ENCODE measurements at regions of chr3 and their contacts with region 1.

Region 1: GRCh38 chr3:171829841-171830517 is 13.2 kb upstream of the TMEM212 start:
- DNase-seq: peak; percentile 96
- H3K4me3 ChIP-seq: no peak overlapping the region
- H3K27ac ChIP-seq: peak overlapping the region; percentile 74
- H3K4me1 ChIP-seq: peaks cover 51% of the 10 kb centered on the region
- H3K27me3 ChIP-seq: no peaks in the 10 kb centered on the region
- CTCF ChIP-seq: peak; percentile 74 to 81
- POLR2A ChIP-seq: no peak

Region 2: GRCh38 chr3:171646357-171647133 is 183.4 kb before region 1 on chr3:
- CTCF ChIA-PET with region 1: interaction called, 27 read pairs
- POLR2A ChIA-PET with region 1: no interaction called
- dilution Hi-C with region 1: no loop called
- intact Hi-C with region 1: loop called (anchors 1 kb)
- DNase-seq: peak; percentile 70
- H3K4me3 ChIP-seq: no peak overlapping the region
- H3K27ac ChIP-seq: no peak overlapping the region
- H3K4me1 ChIP-seq: peaks cover 3% of the 10 kb centered on the region
- H3K27me3 ChIP-seq: no peaks in the 10 kb centered on the region
- CTCF ChIP-seq: peak; percentile 15 to 45
- POLR2A ChIP-seq: no peak

Region 3: GRCh38 chr3:171781711-171782127 is 48.3 kb before region 1 on chr3:
- CTCF ChIA-PET with region 1: interaction called, 24 read pairs
- POLR2A ChIA-PET with region 1: no interaction called
- dilution Hi-C with region 1: no loop called
- intact Hi-C with region 1: no loop called
- DNase-seq: peak; percentile 44
- H3K4me3 ChIP-seq: no peak overlapping the region
- H3K27ac ChIP-seq: peak overlapping the region; percentile 61
- H3K4me1 ChIP-seq: peaks cover 53% of the 10 kb centered on the region
- H3K27me3 ChIP-seq: no peaks in the 10 kb centered on the region
- CTCF ChIP-seq: no peak
- POLR2A ChIP-seq: no peak

Region 4: GRCh38 chr3:171801738-171802600 is 28.0 kb before region 1 on chr3:
- CTCF ChIA-PET with region 1: interaction called, 15 read pairs
- POLR2A ChIA-PET with region 1: interaction called, 3 read pairs
- dilution Hi-C with region 1: no loop called
- intact Hi-C with region 1: loop called (anchors 1 kb)
- DNase-seq: peak; percentile 97
- H3K4me3 ChIP-seq: no peak overlapping the region
- H3K27ac ChIP-seq: peak overlapping the region; percentile 97
- H3K4me1 ChIP-seq: peaks cover 86% of the 10 kb centered on the region
- H3K27me3 ChIP-seq: no peaks in the 10 kb centered on the region
- CTCF ChIP-seq: no peak
- POLR2A ChIP-seq: peak; percentile 40

Region 5: GRCh38 chr3:172341482-172342059 is 511.6 kb after region 1 on chr3:
- CTCF ChIA-PET with region 1: interaction called, 16 read pairs
- POLR2A ChIA-PET with region 1: no interaction called
- dilution Hi-C with region 1: no loop called
- intact Hi-C with region 1: no loop called
- DNase-seq: peak; percentile 63
- H3K4me3 ChIP-seq: no peak overlapping the region
- H3K27ac ChIP-seq: no peak overlapping the region
- H3K4me1 ChIP-seq: no peaks in the 10 kb centered on the region
- H3K27me3 ChIP-seq: no peaks in the 10 kb centered on the region
- CTCF ChIP-seq: peak; percentile 28 to 34
- POLR2A ChIP-seq: no peak